ENCODE measurements at regions of chr10 and their contacts with region 1.

Region 1: GRCh38 chr10:74753442-74754211 is 72.8 kb upstream of the KAT6B start:
- DNase-seq: no peak
- H3K4me3 Mint-ChIP-seq: no peak overlapping the region
- H3K27ac Mint-ChIP-seq: no peak overlapping the region
- H3K4me1 Mint-ChIP-seq: peaks cover 12% of the 10 kb centered on the region
- H3K27me3 Mint-ChIP-seq: no peaks in the 10 kb centered on the region

Region 2: GRCh38 chr10:74262856-74263255 is 490.8 kb before region 1 on chr10:
- intact Hi-C with region 1: loop called (anchors 10 kb)
- DNase-seq: no peak
- H3K4me3 Mint-ChIP-seq: no peak overlapping the region
- H3K27ac Mint-ChIP-seq: peak overlapping the region; percentile 29
- H3K4me1 Mint-ChIP-seq: peaks cover 15% of the 10 kb centered on the region
- H3K27me3 Mint-ChIP-seq: no peaks in the 10 kb centered on the region